Stomach (tissue), 19 donors: ENCODE measurements at regions of chr2 and their contacts with region 1.

Region 1: GRCh38 chr2:31170071-31170698 is 31.9 kb upstream of the GALNT14 start:
- DNase-seq: peak; percentile 53 to 84
- H3K4me3 ChIP-seq: no peak overlapping the region
- H3K27ac ChIP-seq: no peak overlapping the region
- H3K4me1 ChIP-seq: no peaks in the 10 kb centered on the region
- H3K27me3 ChIP-seq: no peaks in the 10 kb centered on the region
- CTCF ChIP-seq: peak in 5 of 7 experiments; percentile 82 to 90 (median 88)
- EP300 ChIP-seq: no peak
- POLR2A ChIP-seq: no peak

Region 2: GRCh38 chr2:31333527-31334183 is 163.5 kb after region 1 on chr2:
- intact Hi-C with region 1: loop called (anchors 10 kb)
- DNase-seq: peak; percentile 88 to 89
- H3K4me3 ChIP-seq: no peak overlapping the region
- H3K27ac ChIP-seq: no peak overlapping the region
- H3K4me1 ChIP-seq: peaks cover 0 to 6% (median 0%) of the 10 kb centered on the region in 4 donors
- H3K27me3 ChIP-seq: peaks cover 0 to 7% (median 0%) of the 10 kb centered on the region in 3 donors
- CTCF ChIP-seq: peak in 5 of 7 experiments; percentile 75 to 92 (median 88)
- EP300 ChIP-seq: no peak
- POLR2A ChIP-seq: no peak